ENCODE measurements at regions of chr9 and their contacts with region 1.

Region 1: DNA sequence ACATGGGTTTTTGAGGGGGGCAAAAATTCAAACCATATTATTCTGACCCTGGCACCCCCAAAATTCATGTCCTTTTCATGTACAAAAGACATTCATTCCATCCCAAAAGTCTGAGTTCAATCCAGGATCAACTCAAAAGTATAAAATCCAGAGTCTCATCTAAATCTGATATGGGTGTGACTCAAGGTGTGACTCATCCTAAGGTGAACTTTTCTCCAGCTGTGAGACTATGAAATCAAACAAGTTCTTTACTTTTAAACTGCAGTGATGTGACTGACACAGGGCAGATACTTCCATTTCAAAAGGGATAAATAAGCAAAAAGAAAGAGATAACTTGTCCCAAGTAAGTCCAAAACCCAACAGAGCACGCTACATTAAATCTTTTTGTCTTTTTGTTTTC is 20.6 kb upstream of the CYLC2 start:
- DNase-seq: no peak
- ATAC-seq: no peak
- H3K4me3 ChIP-seq: no peak overlapping the region
- H3K4me3 Mint-ChIP-seq: no peak overlapping the region
- H3K27ac ChIP-seq: no peak overlapping the region
- H3K27ac Mint-ChIP-seq: no peak overlapping the region
- H3K4me1 ChIP-seq: no peaks in the 10 kb centered on the region
- H3K4me1 Mint-ChIP-seq: no peaks in the 10 kb centered on the region
- H3K27me3 ChIP-seq: no peaks in the 10 kb centered on the region
- H3K27me3 Mint-ChIP-seq: no peaks in the 10 kb centered on the region
- CTCF ChIP-seq: no peak

Region 2: DNA sequence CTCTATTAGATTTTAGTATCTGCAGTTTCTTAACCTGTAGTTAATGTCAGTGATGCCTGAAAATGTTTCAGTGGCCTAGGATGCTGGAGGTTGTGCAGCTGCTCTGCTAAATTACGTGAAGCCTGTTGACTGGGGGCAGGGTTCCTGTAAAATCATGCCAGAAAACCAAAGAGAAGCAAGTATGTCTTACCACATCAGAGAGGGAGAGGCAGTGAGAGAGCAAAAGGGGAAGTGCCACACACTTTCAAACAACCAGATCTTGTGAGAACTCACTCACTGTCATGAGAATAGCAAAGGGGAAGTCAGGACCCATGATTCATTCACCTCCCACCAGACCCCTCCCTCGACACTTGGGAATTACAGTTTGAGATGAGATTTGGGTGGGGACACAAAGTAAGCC is 63.3 kb before region 1 on chr9:
- CTCF ChIA-PET with region 1: no interaction called
- POLR2A ChIA-PET with region 1: no interaction called
- intact Hi-C with region 1: loop called in 1 of 2 experiments (anchors 10 kb)
- DNase-seq: no peak
- ATAC-seq: no peak
- H3K4me3 ChIP-seq: no peak overlapping the region
- H3K4me3 Mint-ChIP-seq: no peak overlapping the region
- H3K27ac ChIP-seq: no peak overlapping the region
- H3K27ac Mint-ChIP-seq: no peak overlapping the region
- H3K4me1 ChIP-seq: no peaks in the 10 kb centered on the region
- H3K4me1 Mint-ChIP-seq: no peaks in the 10 kb centered on the region
- H3K27me3 ChIP-seq: no peaks in the 10 kb centered on the region
- H3K27me3 Mint-ChIP-seq: no peaks in the 10 kb centered on the region
- CTCF ChIP-seq: no peak

Region 3: DNA sequence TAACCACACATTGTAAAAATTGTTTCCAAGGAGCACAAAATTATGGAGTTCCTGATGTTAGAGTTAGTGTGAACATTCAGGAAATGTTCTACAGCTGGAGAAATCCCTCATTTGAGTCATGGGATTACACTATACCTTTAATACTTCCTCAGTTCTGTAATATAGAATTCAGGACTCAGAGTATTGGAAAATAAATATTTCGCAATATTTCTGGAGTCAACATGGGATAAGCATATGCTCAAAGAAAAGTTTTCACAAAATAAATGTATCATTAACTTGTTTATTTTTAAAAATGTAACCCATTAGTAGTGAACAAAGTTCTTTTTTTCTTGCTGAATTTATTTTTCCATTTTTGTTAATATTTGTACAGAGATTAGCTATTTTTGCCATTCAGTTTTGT is 29.2 kb after region 1 on chr9:
- CTCF ChIA-PET with region 1: no interaction called
- POLR2A ChIA-PET with region 1: no interaction called
- intact Hi-C with region 1: no loop called
- DNase-seq: no peak
- ATAC-seq: no peak
- H3K4me3 ChIP-seq: no peak overlapping the region
- H3K4me3 Mint-ChIP-seq: no peak overlapping the region
- H3K27ac ChIP-seq: no peak overlapping the region
- H3K27ac Mint-ChIP-seq: no peak overlapping the region
- H3K4me1 ChIP-seq: no peaks in the 10 kb centered on the region
- H3K4me1 Mint-ChIP-seq: no peaks in the 10 kb centered on the region
- H3K27me3 ChIP-seq: no peaks in the 10 kb centered on the region
- H3K27me3 Mint-ChIP-seq: no peaks in the 10 kb centered on the region
- CTCF ChIP-seq: no peak